CD14-positive monocyte (primary cell): ENCODE measurements at regions of chr13 and their contacts with region 1.

Region 1: GRCh38 chr13:112873851-112874750 is 94.9 kb upstream of the MCF2L start:
- DNase-seq: peak; percentile 39 to 58 (median 52)
- H3K4me3 ChIP-seq: no peak overlapping the region
- H3K4me3 Mint-ChIP-seq: peak overlapping the region in 1 of 2 donors; percentile 12
- H3K27ac ChIP-seq: peak overlapping the region in 1 of 2 donors; percentile 5
- H3K27ac Mint-ChIP-seq: peak overlapping the region in 3 of 7 donors; percentile 3 to 60 (median 56)
- H3K4me1 ChIP-seq: no peaks in the 10 kb centered on the region
- H3K4me1 Mint-ChIP-seq: peaks cover 19% of the 10 kb centered on the region
- H3K27me3 ChIP-seq: peaks cover 0 to 9% of the 10 kb centered on the region in 2 donors
- H3K27me3 Mint-ChIP-seq: peaks cover 13 to 24% (median 19%) of the 10 kb centered on the region in 3 donors
- CTCF ChIP-seq: peak; percentile 96

Region 2: DNA sequence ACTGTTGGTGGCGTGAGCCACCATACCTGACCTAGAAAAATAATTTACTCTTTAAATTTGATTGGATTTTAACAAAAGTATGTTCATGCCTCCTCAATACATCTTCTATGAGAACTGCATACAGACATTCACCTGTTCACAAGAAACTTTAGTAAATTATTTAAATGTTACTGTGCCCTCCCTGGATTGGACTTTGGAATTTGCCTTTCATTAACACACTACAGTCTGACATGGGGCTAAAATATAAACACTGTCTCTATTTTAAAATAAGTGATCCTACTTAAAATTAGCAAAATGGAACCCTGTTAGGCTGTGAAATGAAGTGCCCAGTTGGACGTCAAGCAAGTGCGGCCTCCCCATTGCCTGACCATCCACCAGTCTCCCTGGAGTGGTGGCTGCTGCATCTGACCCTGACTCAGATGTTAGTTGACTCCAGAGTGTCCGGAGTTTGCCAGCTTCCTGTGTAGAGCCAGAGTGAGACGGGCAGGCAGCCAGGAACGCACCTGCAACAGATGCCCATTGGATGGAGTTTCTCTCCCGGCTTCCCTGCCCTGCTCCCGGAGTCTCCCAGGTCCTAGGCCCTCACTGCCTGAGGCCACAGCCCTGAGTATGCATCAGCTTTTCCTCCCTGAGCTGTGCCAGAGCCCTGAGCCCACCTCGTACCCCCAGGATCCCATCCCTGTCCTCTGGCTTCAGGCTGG is 230.2 kb before region 1 on chr13:
- intact Hi-C with region 1: loop called (anchors 2 to 5 kb)
- DNase-seq: no peak
- H3K4me3 ChIP-seq: no peak overlapping the region
- H3K4me3 Mint-ChIP-seq: no peak overlapping the region
- H3K27ac ChIP-seq: no peak overlapping the region
- H3K27ac Mint-ChIP-seq: peak overlapping the region in 1 of 7 donors; percentile 26
- H3K4me1 ChIP-seq: peaks cover 0 to 5% of the 10 kb centered on the region in 2 donors
- H3K4me1 Mint-ChIP-seq: peaks cover 4% of the 10 kb centered on the region
- H3K27me3 ChIP-seq: peaks cover 5 to 16% of the 10 kb centered on the region in 2 donors
- H3K27me3 Mint-ChIP-seq: peaks cover 14 to 28% (median 15%) of the 10 kb centered on the region in 3 donors
- CTCF ChIP-seq: no peak

Region 3: GRCh38 chr13:112711528-112712265 is 162.4 kb before region 1 on chr13:
- intact Hi-C with region 1: no loop called
- DNase-seq: no peak
- H3K4me3 ChIP-seq: no peak overlapping the region
- H3K4me3 Mint-ChIP-seq: no peak overlapping the region
- H3K27ac ChIP-seq: no peak overlapping the region
- H3K27ac Mint-ChIP-seq: peak overlapping the region in 1 of 7 donors; percentile 68
- H3K4me1 ChIP-seq: no peaks in the 10 kb centered on the region
- H3K4me1 Mint-ChIP-seq: peaks cover 17% of the 10 kb centered on the region
- H3K27me3 ChIP-seq: no peaks in the 10 kb centered on the region
- H3K27me3 Mint-ChIP-seq: peaks cover 0 to 3% (median 2%) of the 10 kb centered on the region in 3 donors
- CTCF ChIP-seq: no peak

Region 4: GRCh38 chr13:112928020-112928971 is 54.2 kb after region 1 on chr13:
- intact Hi-C with region 1: no loop called
- DNase-seq: no peak
- H3K4me3 ChIP-seq: no peak overlapping the region
- H3K4me3 Mint-ChIP-seq: peak overlapping the region in 1 of 2 donors; percentile 63
- H3K27ac ChIP-seq: no peak overlapping the region
- H3K27ac Mint-ChIP-seq: no peak overlapping the region
- H3K4me1 ChIP-seq: peaks cover 0 to 7% of the 10 kb centered on the region in 2 donors
- H3K4me1 Mint-ChIP-seq: peaks cover 9% of the 10 kb centered on the region
- H3K27me3 ChIP-seq: peaks cover 17 to 24% of the 10 kb centered on the region in 2 donors
- H3K27me3 Mint-ChIP-seq: peaks cover 30 to 34% (median 34%) of the 10 kb centered on the region in 3 donors
- CTCF ChIP-seq: no peak

Region 5: GRCh38 chr13:112942689-112943308 is 68.7 kb after region 1 on chr13:
- intact Hi-C with region 1: no loop called
- DNase-seq: peak; percentile 83 to 85 (median 84)
- H3K4me3 ChIP-seq: peak overlapping the region in 1 of 3 experiments; percentile 71
- H3K4me3 Mint-ChIP-seq: peak overlapping the region; percentile 78 to 95
- H3K27ac ChIP-seq: no peak overlapping the region
- H3K27ac Mint-ChIP-seq: no peak overlapping the region
- H3K4me1 ChIP-seq: peaks cover 9 to 14% of the 10 kb centered on the region in 2 donors
- H3K4me1 Mint-ChIP-seq: peaks cover 9% of the 10 kb centered on the region
- H3K27me3 ChIP-seq: peaks cover 14 to 47% of the 10 kb centered on the region in 2 donors
- H3K27me3 Mint-ChIP-seq: peaks cover 37 to 61% (median 41%) of the 10 kb centered on the region in 3 donors
- CTCF ChIP-seq: peak; percentile 91

Region 6: GRCh38 chr13:112983428-112984196 is 109.5 kb after region 1 on chr13:
- intact Hi-C with region 1: no loop called
- DNase-seq: no peak
- H3K4me3 ChIP-seq: no peak overlapping the region
- H3K4me3 Mint-ChIP-seq: no peak overlapping the region
- H3K27ac ChIP-seq: no peak overlapping the region
- H3K27ac Mint-ChIP-seq: peak overlapping the region in 1 of 7 donors; percentile 20
- H3K4me1 ChIP-seq: peaks cover 0 to 7% of the 10 kb centered on the region in 2 donors
- H3K4me1 Mint-ChIP-seq: peaks cover 10% of the 10 kb centered on the region
- H3K27me3 ChIP-seq: peaks cover 0 to 4% of the 10 kb centered on the region in 2 donors
- H3K27me3 Mint-ChIP-seq: peaks cover 11 to 22% (median 12%) of the 10 kb centered on the region in 3 donors
- CTCF ChIP-seq: no peak